Thyroid gland (tissue), 4 donors: ENCODE measurements at regions of chr7 and their contacts with region 1.

Region 1: GRCh38 chr7:138008547-138009349 is 6.9 kb upstream of the CREB3L2 start:
- DNase-seq: peak; percentile 37 to 51
- H3K4me3 ChIP-seq: no peak overlapping the region
- H3K27ac ChIP-seq: peak overlapping the region; percentile 57 to 92 (median 91)
- H3K4me1 ChIP-seq: peaks cover 6 to 24% of the 10 kb centered on the region in 2 donors
- H3K27me3 ChIP-seq: no peaks in the 10 kb centered on the region
- CTCF ChIP-seq: peak; percentile 82 to 95 (median 90)
- POLR2A ChIP-seq: no peak

Region 2: GRCh38 chr7:137898839-137899721 is 109.7 kb before region 1 on chr7:
- intact Hi-C with region 1: loop called (anchors 2 kb)
- DNase-seq: peak; percentile 80 to 85
- H3K4me3 ChIP-seq: no peak overlapping the region
- H3K27ac ChIP-seq: peak overlapping the region in 2 of 3 donors; percentile 28 to 71
- H3K4me1 ChIP-seq: peaks cover 7 to 17% of the 10 kb centered on the region in 2 donors
- H3K27me3 ChIP-seq: no peaks in the 10 kb centered on the region
- CTCF ChIP-seq: peak; percentile 72 to 95 (median 91)
- POLR2A ChIP-seq: no peak